ENCODE measurements at regions of chr18 and their contacts with region 1.

Region 1: GRCh38 chr18:50307738-50308470 is 20.4 kb upstream of the CXXC1 start:
- DNase-seq: peak; percentile 78 to 96 (median 88)
- ATAC-seq: peak; percentile 99
- H3K4me3 ChIP-seq: peak overlapping the region; percentile 56
- H3K4me3 Mint-ChIP-seq: peak overlapping the region; percentile 96
- H3K27ac ChIP-seq: no peak overlapping the region
- H3K27ac Mint-ChIP-seq: peak overlapping the region; percentile 74
- H3K4me1 ChIP-seq: peaks cover 12% of the 10 kb centered on the region
- H3K4me1 Mint-ChIP-seq: peaks cover 20% of the 10 kb centered on the region
- H3K27me3 ChIP-seq: peaks cover 4 to 8% of the 10 kb centered on the region in 2 experiments
- H3K27me3 Mint-ChIP-seq: peaks cover 29% of the 10 kb centered on the region
- CTCF ChIP-seq: no peak

Region 2: DNA sequence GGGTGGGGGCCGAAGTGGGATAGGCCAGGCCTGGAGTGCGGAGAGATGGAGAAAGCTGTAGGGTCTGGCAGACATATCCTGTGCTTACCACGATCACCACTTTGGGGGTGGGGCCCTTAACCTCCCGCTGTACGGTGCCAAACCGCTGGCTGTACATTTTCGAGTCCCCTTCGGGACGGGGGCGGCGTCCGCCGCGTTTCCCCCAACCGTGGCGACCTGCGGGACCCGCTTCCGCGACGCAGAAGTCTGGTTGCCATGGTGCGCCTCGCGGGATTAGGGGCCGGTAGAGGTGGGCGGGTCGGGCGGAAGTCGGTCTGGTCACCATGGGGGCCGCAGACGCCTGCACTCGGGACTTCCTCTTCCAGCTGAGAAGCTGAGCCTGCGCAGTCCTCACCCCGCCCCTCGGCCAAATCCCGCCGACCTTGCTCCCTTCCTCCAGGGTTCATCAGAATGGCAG is 41.6 kb before region 1 on chr18 and contains the start of gene CFAP53:
- CTCF ChIA-PET with region 1: no interaction called
- POLR2A ChIA-PET with region 1: interaction called, 5 read pairs
- intact Hi-C with region 1: loop called in 1 of 2 experiments (anchors 5 kb)
- DNase-seq: peak in 13 of 14 experiments; percentile 54 to 92 (median 80)
- ATAC-seq: peak; percentile 77
- H3K4me3 ChIP-seq: peak within 1 kb of the TSS; percentile 66
- H3K4me3 Mint-ChIP-seq: peak within 1 kb of the TSS; percentile 93
- H3K27ac ChIP-seq: peak within 1 kb of the TSS; percentile 13 to 64
- H3K27ac Mint-ChIP-seq: peak within 1 kb of the TSS; percentile 45
- H3K4me1 ChIP-seq: peaks cover 25% of the 10 kb centered on the region
- H3K4me1 Mint-ChIP-seq: peaks cover 30% of the 10 kb centered on the region
- H3K27me3 ChIP-seq: no peaks in the 10 kb centered on the region
- H3K27me3 Mint-ChIP-seq: no peaks in the 10 kb centered on the region
- CTCF ChIP-seq: no peak
- total RNA-seq, gene CFAP53: 0.33 to 0.47 TPM

Region 3: DNA sequence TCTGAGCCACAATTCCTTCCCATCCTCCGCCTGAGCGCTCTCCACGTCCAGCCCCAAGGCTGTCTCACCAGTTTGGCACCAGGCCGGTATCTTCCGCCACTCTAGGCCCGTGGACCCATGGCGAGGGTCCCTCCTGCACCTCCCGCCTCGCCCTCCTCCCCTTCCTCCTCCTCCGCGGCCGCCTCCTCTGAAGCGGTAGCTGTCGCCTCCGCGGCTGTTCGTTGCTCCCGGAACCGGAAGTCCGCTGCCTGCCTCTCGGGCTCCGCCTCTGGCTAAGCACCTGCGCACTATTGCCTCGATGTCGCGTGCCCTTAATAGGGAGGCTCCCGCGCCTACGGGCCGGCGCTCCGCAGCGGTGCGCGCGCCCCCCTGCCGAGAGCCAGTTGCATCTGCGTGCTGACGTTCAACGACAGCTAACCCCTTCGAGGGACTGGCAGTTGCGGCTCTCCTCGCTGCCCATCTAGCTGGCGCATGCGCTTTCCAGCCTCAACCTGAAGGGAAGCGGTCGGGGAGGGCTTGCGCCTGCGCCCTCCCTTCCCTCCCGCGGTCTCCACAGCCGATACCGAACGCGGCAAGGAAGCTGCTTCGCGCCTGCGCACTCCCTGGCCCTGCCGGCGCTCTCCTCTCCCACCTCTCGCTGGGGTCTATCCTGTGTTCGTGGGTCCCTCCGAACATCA is 26.5 kb before region 1 on chr18 and contains the start of gene MBD1:
- CTCF ChIA-PET with region 1: no interaction called
- POLR2A ChIA-PET with region 1: interaction called, 23 read pairs
- intact Hi-C with region 1: loop called in 1 of 2 experiments (anchors 2 kb)
- DNase-seq: peak; percentile 93 to 100 (median 96)
- ATAC-seq: peak; percentile 90
- H3K4me3 ChIP-seq: peak within 1 kb of the TSS; percentile 93
- H3K4me3 Mint-ChIP-seq: peak within 1 kb of the TSS; percentile 100
- H3K27ac ChIP-seq: peak within 1 kb of the TSS; percentile 84 to 90
- H3K27ac Mint-ChIP-seq: peak within 1 kb of the TSS; percentile 98
- H3K4me1 ChIP-seq: peaks cover 31% of the 10 kb centered on the region
- H3K4me1 Mint-ChIP-seq: peaks cover 38% of the 10 kb centered on the region
- H3K27me3 ChIP-seq: no peaks in the 10 kb centered on the region
- H3K27me3 Mint-ChIP-seq: no peaks in the 10 kb centered on the region
- CTCF ChIP-seq: no peak
- total RNA-seq, gene MBD1: 103 to 107 TPM

Region 4: GRCh38 chr18:50287441-50288347 is 20.2 kb before region 1 on chr18 and contains the start of gene CXXC1:
- CTCF ChIA-PET with region 1: interaction called, 4 read pairs
- POLR2A ChIA-PET with region 1: interaction called, 23 read pairs
- intact Hi-C with region 1: loop called (anchors 1 to 2 kb)
- DNase-seq: peak; percentile 96 to 99 (median 97)
- ATAC-seq: peak; percentile 85
- H3K4me3 ChIP-seq: peak within 1 kb of the TSS; percentile 85
- H3K4me3 Mint-ChIP-seq: peak within 1 kb of the TSS; percentile 96
- H3K27ac ChIP-seq: peak within 1 kb of the TSS; percentile 72 to 93
- H3K27ac Mint-ChIP-seq: peak within 1 kb of the TSS; percentile 98
- H3K4me1 ChIP-seq: peaks cover 24% of the 10 kb centered on the region
- H3K4me1 Mint-ChIP-seq: peaks cover 27% of the 10 kb centered on the region
- H3K27me3 ChIP-seq: no peaks in the 10 kb centered on the region
- H3K27me3 Mint-ChIP-seq: no peaks in the 10 kb centered on the region
- CTCF ChIP-seq: peak; percentile 61
- total RNA-seq, gene CXXC1: 120 to 128 TPM

Region 5: DNA sequence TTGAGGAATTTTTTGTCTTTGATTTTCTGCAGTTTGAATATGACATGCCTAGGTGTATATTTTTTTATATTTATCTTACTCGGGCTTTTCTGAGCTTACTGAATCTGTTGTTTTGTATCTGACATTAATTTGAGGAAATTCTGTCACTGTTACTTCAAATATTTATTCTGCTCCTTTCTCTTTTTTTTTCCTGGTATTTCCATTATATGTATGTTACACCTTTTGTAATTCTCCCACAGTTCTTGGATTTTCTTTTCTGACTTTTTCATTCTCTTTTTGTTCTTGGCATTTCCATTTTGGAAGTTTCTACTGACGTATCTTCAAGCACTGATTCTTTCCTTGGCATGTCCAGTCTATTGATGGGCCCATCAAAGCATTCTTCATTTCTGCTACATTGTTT is 42.8 kb after region 1 on chr18:
- CTCF ChIA-PET with region 1: no interaction called
- POLR2A ChIA-PET with region 1: no interaction called
- intact Hi-C with region 1: loop called in 1 of 2 experiments (anchors 5 kb)
- DNase-seq: no peak
- ATAC-seq: no peak
- H3K4me3 ChIP-seq: no peak overlapping the region
- H3K4me3 Mint-ChIP-seq: no peak overlapping the region
- H3K27ac ChIP-seq: no peak overlapping the region
- H3K27ac Mint-ChIP-seq: no peak overlapping the region
- H3K4me1 ChIP-seq: no peaks in the 10 kb centered on the region
- H3K4me1 Mint-ChIP-seq: no peaks in the 10 kb centered on the region
- H3K27me3 ChIP-seq: peaks cover 3 to 18% of the 10 kb centered on the region in 2 experiments
- H3K27me3 Mint-ChIP-seq: peaks cover 36% of the 10 kb centered on the region
- CTCF ChIP-seq: no peak

Region 6: DNA sequence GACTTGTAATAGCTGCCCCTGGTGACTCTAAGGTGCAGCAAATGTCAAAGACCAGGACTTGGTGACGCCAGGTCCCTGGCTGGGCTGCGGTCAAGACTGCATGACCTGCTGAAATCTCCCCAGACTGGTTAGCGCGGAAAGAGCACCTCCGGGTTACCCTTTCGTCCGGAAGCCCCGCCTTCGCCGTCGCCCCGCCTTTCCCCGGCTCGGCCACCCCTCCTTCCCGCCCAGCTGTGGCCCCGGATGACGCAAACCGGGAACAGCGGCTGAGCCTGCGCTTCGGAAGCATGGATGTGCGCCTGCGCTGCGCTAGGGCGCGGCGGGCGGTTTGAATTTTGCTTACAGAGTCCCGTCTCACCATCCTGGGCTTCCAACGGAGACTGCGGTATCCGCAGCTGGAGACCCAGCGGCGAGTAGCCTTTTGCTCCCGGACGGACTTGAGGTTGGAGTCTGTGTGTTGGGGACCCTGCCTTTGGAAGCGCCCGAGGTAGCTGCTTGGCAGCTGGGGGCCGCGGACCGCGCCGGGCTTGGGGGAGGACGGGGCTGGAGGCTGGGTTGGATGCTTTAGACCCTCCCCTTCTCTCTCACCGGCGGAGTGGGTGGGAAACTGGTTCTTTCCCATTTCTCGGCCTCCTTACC is 67.0 kb after region 1 on chr18 and contains the start of gene SKA1:
- CTCF ChIA-PET with region 1: interaction called, 3 read pairs
- POLR2A ChIA-PET with region 1: no interaction called
- intact Hi-C with region 1: loop called in 1 of 2 experiments (anchors 2 kb)
- DNase-seq: peak; percentile 84 to 96 (median 90)
- ATAC-seq: peak; percentile 100
- H3K4me3 ChIP-seq: peak within 1 kb of the TSS; percentile 77
- H3K4me3 Mint-ChIP-seq: peak within 1 kb of the TSS; percentile 80
- H3K27ac ChIP-seq: peak within 1 kb of the TSS; percentile 56 to 58
- H3K27ac Mint-ChIP-seq: peak within 1 kb of the TSS; percentile 81
- H3K4me1 ChIP-seq: peaks cover 12% of the 10 kb centered on the region
- H3K4me1 Mint-ChIP-seq: peaks cover 14% of the 10 kb centered on the region
- H3K27me3 ChIP-seq: peaks cover 0 to 3% of the 10 kb centered on the region in 2 experiments
- H3K27me3 Mint-ChIP-seq: no peaks in the 10 kb centered on the region
- CTCF ChIP-seq: no peak
- total RNA-seq, gene SKA1: 0.08 to 0.20 TPM

Region 7: DNA sequence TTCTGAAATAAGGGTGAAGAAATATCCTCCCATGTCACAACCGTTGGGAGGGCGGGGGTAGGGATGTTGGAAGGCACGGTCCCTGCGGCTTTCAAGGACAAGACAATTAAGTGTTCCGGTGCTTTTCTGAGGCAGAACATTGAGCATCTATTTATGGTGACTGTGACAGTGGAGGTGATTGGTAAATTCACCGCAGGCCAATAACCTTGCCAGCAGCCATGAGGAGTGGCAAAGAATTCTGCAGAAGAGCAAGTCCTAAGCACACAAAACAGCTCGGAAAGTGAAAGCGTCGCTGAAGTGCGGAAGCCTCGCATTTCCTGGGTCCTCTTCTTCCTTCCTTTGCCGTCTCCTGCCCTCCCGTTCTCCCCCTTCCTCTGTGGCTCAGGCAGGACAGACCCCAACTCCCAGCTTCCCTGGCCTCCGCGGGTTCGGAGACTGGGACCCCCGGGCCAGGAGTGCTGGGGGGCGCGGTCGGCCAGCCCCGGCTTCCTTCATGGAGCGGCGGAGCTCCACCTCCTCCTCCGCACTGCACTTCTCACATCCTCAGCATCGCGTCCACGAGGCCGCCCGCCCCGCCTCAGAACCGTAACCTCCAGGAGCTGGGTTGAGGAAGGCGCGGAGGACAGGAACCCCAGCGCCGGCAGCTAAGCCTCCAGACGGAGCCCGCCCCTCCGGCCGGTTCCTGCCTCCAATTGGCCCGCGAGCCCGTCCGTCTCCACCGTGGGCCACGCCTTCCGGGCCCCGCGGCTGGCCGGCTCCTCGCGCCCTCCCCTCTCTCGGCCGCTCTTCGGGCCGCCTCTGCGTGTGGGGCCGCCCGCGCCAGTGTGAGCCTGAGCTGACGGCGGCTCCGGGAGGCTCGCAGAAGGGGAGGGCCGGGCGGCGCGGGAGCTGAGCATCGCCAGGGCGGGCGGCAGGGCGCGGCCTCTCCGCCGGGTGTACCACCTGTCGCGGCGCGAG is 570.7 kb after region 1 on chr18 and contains the start of gene ME2:
- CTCF ChIA-PET with region 1: no interaction called
- POLR2A ChIA-PET with region 1: no interaction called
- intact Hi-C with region 1: loop called in 1 of 2 experiments (anchors 10 kb)
- DNase-seq: peak; percentile 77 to 94 (median 88)
- ATAC-seq: peak; percentile 90
- H3K4me3 ChIP-seq: peak within 1 kb of the TSS; percentile 93
- H3K4me3 Mint-ChIP-seq: peak within 1 kb of the TSS; percentile 98
- H3K27ac ChIP-seq: peak within 1 kb of the TSS; percentile 95 to 97
- H3K27ac Mint-ChIP-seq: peak within 1 kb of the TSS; percentile 97
- H3K4me1 ChIP-seq: peaks cover 32% of the 10 kb centered on the region
- H3K4me1 Mint-ChIP-seq: peaks cover 28% of the 10 kb centered on the region
- H3K27me3 ChIP-seq: no peaks in the 10 kb centered on the region
- H3K27me3 Mint-ChIP-seq: peaks cover 6% of the 10 kb centered on the region
- CTCF ChIP-seq: no peak
- total RNA-seq, gene ME2: 15.6 to 16.1 TPM

Measured in CD4-positive, alpha-beta T cell (primary cell).